Lower leg skin (tissue), 4 donors: ENCODE measurements at regions of chr3 and their contacts with region 1.

Region 1: GRCh38 chr3:177013681-177014280 is 183.5 kb downstream of the TBL1XR1 start:
- DNase-seq: no peak
- H3K4me3 ChIP-seq: no peak overlapping the region
- CTCF ChIP-seq: no peak
- POLR2A ChIP-seq: no peak

Region 2: GRCh38 chr3:176767385-176767784 is 246.4 kb before region 1 on chr3:
- intact Hi-C with region 1: no loop called
- DNase-seq: peak in 1 of 2 donors; percentile 22
- H3K4me3 ChIP-seq: no peak overlapping the region
- CTCF ChIP-seq: no peak
- POLR2A ChIP-seq: no peak

Region 3: DNA sequence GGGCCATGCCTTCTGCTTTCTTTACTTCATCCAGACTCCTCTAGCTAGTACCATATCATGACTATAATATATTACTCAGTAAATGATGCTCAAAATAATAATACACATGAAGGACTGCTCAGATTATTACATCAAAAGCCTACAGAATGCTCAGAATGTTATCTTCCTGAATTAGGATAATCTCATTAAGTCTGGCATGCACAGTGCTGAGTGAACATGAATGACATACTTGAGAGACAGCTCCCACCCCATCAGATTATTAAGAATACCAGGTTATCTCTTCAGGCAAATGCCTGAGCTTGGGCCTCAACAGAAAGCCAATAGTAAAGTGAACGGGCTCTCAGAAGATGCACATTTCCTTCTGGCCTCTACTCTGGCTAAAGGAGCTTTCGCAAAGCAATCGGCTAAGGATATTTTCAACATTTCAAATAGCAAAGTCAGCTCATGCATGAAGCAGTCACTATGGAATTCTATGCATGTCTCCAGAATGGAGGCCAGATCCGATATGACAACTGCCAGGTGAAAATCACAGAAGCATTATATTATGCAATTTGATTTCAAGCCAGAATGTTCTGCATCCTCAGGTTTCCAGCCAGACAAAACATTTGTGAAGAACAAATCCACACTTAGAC is 1645.0 kb after region 1 on chr3:
- intact Hi-C with region 1: loop called (anchors 5 kb)
- DNase-seq: no peak
- H3K4me3 ChIP-seq: no peak overlapping the region
- CTCF ChIP-seq: no peak
- POLR2A ChIP-seq: no peak

Region 4: GRCh38 chr3:178810181-178810580 is 1796.4 kb after region 1 on chr3:
- intact Hi-C with region 1: no loop called
- DNase-seq: no peak
- H3K4me3 ChIP-seq: no peak overlapping the region
- CTCF ChIP-seq: no peak
- POLR2A ChIP-seq: no peak